GM10248 (cell line): ENCODE measurements at regions of chr10 and their contacts with region 1.

Region 1: DNA sequence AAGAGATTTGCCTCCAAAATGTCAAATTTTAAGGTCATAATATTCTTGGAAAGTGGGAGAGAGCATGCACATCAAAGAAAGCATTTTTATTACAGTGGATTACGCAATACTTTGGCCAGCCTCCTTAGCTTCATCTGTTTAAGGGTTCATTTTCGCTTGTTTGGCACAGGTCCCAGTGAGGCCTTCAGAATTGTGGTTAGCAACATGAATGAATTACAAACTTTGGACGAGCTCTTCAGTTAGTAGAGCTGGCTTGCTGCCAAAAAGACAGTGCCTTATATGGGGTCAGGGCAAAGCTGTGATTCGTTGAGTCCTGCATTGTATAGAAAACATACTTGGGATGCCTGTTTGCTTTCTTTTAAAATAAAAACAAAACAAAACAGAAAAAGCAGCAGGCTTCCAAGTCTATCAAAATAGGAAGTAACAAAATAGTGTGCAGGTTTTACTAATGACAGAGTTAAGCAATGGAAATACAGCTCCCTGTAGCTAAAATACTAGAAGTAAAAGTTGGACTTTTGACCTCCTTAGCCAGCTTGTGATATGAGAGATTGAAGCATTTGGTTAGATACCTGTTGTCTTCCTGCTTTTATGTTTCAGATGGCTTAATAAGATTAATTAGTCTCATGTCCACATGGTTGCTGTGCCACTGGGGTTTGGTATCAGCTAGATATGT is 190.8 kb downstream of the MLLT10 start:
- DNase-seq: peak; percentile 37
- CTCF ChIP-seq: no peak

Region 2: DNA sequence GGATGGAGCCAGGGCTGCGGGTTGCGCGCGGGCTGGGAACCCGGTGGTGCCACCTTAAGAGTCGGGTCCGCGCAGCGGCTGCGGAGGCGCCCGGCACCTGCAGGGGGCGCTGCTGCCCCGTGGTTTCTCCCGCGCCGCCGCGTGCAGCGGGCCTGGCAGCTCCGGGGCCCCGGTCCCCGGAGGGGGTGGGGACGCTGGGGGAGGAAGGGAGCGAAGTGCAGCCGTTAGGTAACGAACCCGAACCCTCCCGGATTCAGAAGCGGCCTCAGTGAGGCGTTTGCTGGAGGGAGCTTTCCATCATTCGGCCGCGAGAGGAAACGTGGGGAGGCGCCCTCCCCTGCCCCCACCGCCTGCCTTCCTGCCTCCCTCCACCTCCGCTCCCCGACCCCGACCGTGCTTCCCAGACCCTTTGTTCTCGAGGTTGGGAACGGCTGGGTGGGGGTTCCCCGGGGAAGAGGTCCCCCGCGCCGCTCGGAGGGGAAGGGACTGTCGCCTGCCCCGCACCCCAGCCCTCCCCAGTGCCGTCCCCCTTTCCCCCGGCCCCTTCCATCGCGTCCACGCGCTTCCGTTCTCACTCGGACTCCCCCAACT is 229.0 kb before region 1 on chr10:
- CTCF ChIA-PET with region 1: interaction called, 51 read pairs
- POLR2A ChIA-PET with region 1: no interaction called
- DNase-seq: peak; percentile 94
- CTCF ChIP-seq: peak; percentile 95

Region 3: DNA sequence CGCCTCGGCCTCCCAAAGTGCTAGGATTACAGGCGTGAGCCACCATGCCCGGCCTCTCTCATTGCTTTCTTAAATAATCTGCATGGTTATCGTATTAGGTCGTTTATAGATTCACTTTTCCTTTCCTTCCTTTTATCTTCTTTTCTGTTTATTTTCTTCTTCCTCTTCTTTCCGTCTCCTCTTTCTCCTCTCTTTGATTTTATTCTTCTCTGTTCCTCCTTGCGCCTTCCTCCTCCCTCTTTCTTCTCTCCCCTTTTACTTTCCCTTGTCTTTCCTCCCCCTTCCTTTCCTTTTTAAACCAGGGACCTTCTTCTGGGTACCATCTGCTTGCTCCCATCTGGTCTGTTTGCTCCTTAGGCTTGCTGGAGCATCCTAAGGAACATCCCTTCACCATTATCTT is 172.2 kb before region 1 on chr10:
- CTCF ChIA-PET with region 1: no interaction called
- POLR2A ChIA-PET with region 1: interaction called, 11 read pairs
- DNase-seq: no peak
- CTCF ChIP-seq: no peak

Region 4: GRCh38 chr10:21849607-21850006 is 124.8 kb after region 1 on chr10:
- CTCF ChIA-PET with region 1: no interaction called
- POLR2A ChIA-PET with region 1: no interaction called
- DNase-seq: no peak
- CTCF ChIP-seq: no peak